Activated T-helper 1 cell treated with anti-CD3 and anti-CD28 coated beads, Interleukin-12 subunit alpha, Interleukin-12 subunit beta, Interleukin-2, Interleukin-4 antibody, amounts not matched to agents 30 ng/mL and 10 ng/mL and 1 ng/mL, durations not matched to agents 14 hours and 24 hours and 36 hours (primary cell): ENCODE measurements at regions of chr12 and their contacts with region 1.

Region 1: DNA sequence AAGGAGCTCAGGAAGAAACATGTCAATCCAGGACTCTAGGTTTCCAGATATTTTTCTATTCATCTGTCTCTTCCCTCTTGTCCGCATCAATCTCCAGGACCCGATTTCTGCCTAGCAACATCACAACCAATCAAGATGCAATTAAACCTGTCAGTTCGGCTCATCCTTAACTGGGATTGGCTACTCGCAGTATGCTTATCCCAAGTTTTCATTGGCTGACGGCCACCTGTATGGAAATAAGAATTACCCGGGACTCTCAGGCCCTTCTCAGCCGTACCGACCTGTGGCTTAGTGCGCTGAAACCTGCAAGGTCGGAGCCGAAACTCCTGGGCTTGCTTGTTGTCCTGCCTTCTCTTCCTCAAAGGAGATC is 20.4 kb upstream of the ATP5MC2 start:
- DNase-seq: no peak
- H3K4me3 Mint-ChIP-seq: no peak overlapping the region
- H3K27ac Mint-ChIP-seq: no peak overlapping the region
- H3K4me1 Mint-ChIP-seq: peaks cover 23% of the 10 kb centered on the region
- H3K27me3 Mint-ChIP-seq: peaks cover 88% of the 10 kb centered on the region

Region 2: DNA sequence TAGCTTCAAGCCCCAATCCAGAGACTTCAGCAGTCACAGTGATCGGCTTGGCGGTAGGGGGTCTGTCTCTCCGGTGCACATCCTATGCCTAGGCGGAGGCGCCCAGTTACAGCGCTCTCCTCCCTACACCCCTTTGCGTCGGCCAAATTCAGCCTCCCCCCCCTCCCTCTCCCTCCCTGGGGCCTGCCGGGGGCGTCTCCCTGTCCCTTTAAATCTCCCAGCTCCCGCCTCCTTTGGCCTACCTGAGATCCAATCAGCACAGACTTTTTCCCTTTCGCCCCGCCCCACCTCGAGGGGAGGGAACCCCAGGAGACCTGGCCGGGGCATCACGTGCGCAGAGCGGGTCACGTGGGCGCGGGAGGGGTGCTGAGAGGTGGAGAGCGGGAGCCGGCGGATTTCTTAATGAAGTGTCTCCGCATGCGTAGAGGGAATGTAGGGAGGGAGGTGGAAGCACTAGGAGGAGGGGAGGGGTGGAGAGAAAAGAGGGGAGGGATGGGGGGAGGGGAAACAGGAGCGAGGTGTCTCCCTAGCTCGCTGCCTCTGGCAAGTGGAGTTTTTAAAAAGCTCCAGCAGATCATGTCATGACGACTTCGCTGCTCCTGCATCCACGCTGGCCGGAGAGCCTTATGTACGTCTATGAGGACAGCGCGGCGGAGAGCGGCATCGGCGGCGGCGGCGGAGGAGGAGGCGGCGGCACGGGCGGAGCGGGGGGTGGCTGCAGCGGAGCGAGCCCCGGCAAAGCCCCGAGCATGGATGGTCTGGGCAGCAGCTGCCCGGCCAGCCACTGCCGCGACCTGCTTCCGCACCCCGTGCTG is 242.3 kb after region 1 on chr12 and contains the start of gene HOXC13:
- intact Hi-C with region 1: loop called (anchors 10 kb)
- DNase-seq: no peak
- H3K4me3 Mint-ChIP-seq: no peak within 1 kb of the TSS
- H3K27ac Mint-ChIP-seq: peak within 1 kb of the TSS; percentile 31
- H3K4me1 Mint-ChIP-seq: no peaks in the 10 kb centered on the region
- H3K27me3 Mint-ChIP-seq: peaks cover 79% of the 10 kb centered on the region
- total RNA-seq, gene HOXC13: not detected in 2 replicates